ENCODE measurements at regions of chr15 and their contacts with region 1.

Region 1: DNA sequence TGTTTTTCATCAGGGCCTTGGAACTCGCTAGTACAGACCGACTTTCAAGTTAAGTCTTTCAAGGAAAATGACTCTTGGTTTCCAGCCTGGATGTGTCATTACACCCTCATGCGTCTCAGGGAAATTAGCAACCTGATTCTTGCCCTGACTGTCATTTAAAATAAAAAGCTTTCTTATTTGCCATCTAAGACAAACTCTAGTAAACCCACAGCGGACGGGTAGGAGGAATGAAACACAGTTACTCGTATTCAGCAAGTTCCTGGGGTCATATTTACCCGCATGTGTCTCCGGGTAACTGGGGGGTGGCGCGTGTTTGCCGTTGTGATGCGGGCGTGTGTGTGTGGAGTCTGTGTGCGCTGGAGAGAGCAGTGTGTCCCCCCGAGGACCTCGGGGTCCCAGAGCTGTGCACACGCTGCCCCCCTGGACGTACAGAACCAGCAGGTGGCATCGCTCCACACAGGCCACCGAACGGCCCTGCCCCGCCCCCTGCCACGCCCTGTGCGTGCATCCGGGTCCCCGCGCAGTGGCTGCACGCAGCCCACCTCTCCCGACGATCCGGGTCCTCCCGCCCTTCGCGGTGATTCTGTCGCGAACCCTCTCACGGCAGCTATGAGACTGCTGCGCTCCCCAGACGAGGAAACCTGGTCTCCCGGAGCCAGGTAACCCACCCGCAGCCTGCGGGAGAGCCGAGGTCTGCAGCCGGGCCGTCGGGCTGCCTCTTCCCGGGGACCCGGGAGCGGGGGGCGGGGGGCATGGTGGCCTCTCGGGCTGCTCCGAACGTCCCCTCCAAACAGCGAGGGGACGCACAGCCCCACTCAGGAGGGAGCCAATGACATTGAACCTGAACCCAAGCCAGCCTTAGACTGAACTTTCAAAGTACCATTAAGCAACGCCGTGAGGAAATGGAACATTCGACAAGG is 30.1 kb upstream of the ALDH1A3 start:
- DNase-seq: peak; percentile 72
- ATAC-seq: peak; percentile 92

Region 2: GRCh38 chr15:100781061-100781960 is 68.2 kb before region 1 on chr15:
- intact Hi-C with region 1: loop called (anchors 5 kb)
- DNase-seq: no peak
- ATAC-seq: no peak

Measured in sciatic nerve (tissue), 2 donors.